ENCODE measurements at regions of chr7 and their contacts with region 1.

Region 1: GRCh38 chr7:17126413-17127268 is 171.8 kb upstream of the AHR start:
- DNase-seq: no peak
- ATAC-seq: no peak
- H3K4me3 ChIP-seq: no peak overlapping the region
- H3K4me3 Mint-ChIP-seq: no peak overlapping the region
- H3K27ac ChIP-seq: no peak overlapping the region
- H3K27ac Mint-ChIP-seq: no peak overlapping the region
- H3K4me1 ChIP-seq: no peaks in the 10 kb centered on the region
- H3K4me1 Mint-ChIP-seq: peaks cover 7% of the 10 kb centered on the region
- H3K27me3 ChIP-seq: no peaks in the 10 kb centered on the region
- H3K27me3 Mint-ChIP-seq: no peaks in the 10 kb centered on the region
- CTCF ChIP-seq: no peak

Region 2: GRCh38 chr7:16579216-16579615 is 547.4 kb before region 1 on chr7:
- CTCF ChIA-PET with region 1: no interaction called
- POLR2A ChIA-PET with region 1: no interaction called
- intact Hi-C with region 1: no loop called
- DNase-seq: no peak
- ATAC-seq: no peak
- H3K4me3 ChIP-seq: no peak overlapping the region
- H3K4me3 Mint-ChIP-seq: no peak overlapping the region
- H3K27ac ChIP-seq: no peak overlapping the region
- H3K27ac Mint-ChIP-seq: no peak overlapping the region
- H3K4me1 ChIP-seq: no peaks in the 10 kb centered on the region
- H3K4me1 Mint-ChIP-seq: no peaks in the 10 kb centered on the region
- H3K27me3 ChIP-seq: no peaks in the 10 kb centered on the region
- H3K27me3 Mint-ChIP-seq: peaks cover 4% of the 10 kb centered on the region
- CTCF ChIP-seq: no peak

Region 3: DNA sequence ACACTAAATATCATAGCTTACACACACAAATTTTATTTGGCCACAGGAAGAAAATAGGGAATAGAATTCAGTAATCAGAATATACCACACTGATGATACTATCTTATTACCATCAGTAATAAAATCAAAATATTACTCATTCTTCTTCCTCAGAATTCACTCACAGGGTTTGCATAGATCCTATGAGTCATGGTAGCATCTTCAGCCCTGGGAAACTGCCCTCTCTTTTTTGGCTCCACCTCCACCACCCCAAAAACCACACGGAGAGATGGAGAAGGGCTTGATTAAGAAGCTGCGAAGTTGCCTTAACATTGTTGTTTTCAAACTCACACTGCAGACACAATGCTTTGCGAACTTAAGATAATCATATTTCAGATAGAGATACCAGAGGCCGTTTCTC is 17.7 kb after region 1 on chr7:
- CTCF ChIA-PET with region 1: interaction called, 3 read pairs
- POLR2A ChIA-PET with region 1: no interaction called
- intact Hi-C with region 1: loop called in 1 of 2 experiments (anchors 2 kb)
- DNase-seq: peak in 8 of 9 experiments; percentile 25 to 68 (median 50)
- ATAC-seq: peak; percentile 76
- H3K4me3 ChIP-seq: no peak overlapping the region
- H3K4me3 Mint-ChIP-seq: peak overlapping the region; percentile 62
- H3K27ac ChIP-seq: no peak overlapping the region
- H3K27ac Mint-ChIP-seq: peak overlapping the region; percentile 53
- H3K4me1 ChIP-seq: peaks cover 26% of the 10 kb centered on the region
- H3K4me1 Mint-ChIP-seq: peaks cover 43% of the 10 kb centered on the region
- H3K27me3 ChIP-seq: no peaks in the 10 kb centered on the region
- H3K27me3 Mint-ChIP-seq: no peaks in the 10 kb centered on the region
- CTCF ChIP-seq: no peak